Lower leg skin (tissue), 4 donors: ENCODE measurements at regions of chr15 and their contacts with region 1.

Region 1: GRCh38 chr15:71249986-71250385 is 134.7 kb downstream of the THSD4 start:
- DNase-seq: no peak
- H3K4me3 ChIP-seq: no peak overlapping the region
- CTCF ChIP-seq: no peak
- POLR2A ChIP-seq: no peak

Region 2: DNA sequence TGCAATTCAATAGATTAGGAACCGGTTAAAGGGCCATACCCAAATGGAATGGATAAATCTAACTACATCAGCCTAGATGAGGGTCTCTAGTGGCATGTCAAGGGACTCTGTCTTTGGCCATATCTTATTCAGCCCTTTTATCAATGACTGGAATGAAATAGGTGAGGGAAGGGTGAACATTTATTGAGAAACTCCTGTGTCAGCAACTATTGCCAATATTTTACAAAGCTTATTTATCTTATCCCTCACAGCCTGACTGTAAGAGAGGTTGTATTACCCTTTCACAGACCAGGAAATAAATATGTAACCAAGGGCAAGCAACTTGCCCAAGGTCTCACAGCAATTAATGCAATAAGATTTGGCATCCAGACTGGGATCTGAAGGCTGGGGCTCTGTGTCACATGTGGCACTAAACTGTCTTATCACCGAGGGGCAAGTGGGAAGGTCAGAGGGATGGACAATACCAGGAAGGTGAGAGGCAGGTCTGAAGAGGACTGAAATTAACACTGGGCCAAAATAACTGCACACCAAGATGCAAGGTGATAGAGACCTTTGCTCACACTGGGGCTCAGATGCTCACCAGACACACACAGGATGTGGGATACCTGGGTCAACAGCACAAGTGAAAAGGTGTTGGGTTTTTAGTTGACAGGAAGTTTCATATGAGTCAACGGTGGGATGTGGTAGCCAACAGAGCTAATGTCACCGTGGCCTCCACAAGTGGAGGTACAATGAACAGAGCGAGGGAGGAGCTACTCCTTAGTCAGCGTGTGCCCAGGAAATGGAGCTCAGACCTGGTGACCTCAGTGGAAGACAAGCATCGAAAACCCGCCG is 1536.0 kb before region 1 on chr15:
- intact Hi-C with region 1: no loop called
- DNase-seq: no peak
- H3K4me3 ChIP-seq: no peak overlapping the region
- CTCF ChIP-seq: no peak
- POLR2A ChIP-seq: no peak

Region 3: DNA sequence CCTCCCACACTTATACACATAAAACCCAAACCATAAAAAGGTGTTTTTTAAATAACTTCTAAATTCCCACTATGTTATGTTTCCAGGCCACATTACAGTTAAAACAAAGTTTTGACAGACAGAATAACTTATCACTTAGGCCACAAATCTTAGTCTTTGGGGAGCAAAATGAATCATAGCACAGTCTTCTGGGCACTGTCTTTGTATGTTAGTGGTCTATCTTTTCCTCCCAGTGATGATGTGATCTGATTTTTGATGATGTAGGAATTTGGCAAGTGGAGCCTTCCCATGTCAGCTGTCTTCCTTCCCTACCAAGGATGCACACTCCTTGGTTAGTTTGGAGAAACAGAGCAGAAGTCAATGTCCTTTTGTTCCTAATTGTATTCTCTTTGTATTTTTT is 67.5 kb before region 1 on chr15:
- intact Hi-C with region 1: no loop called
- DNase-seq: no peak
- H3K4me3 ChIP-seq: no peak overlapping the region
- CTCF ChIP-seq: no peak
- POLR2A ChIP-seq: no peak

Region 4: DNA sequence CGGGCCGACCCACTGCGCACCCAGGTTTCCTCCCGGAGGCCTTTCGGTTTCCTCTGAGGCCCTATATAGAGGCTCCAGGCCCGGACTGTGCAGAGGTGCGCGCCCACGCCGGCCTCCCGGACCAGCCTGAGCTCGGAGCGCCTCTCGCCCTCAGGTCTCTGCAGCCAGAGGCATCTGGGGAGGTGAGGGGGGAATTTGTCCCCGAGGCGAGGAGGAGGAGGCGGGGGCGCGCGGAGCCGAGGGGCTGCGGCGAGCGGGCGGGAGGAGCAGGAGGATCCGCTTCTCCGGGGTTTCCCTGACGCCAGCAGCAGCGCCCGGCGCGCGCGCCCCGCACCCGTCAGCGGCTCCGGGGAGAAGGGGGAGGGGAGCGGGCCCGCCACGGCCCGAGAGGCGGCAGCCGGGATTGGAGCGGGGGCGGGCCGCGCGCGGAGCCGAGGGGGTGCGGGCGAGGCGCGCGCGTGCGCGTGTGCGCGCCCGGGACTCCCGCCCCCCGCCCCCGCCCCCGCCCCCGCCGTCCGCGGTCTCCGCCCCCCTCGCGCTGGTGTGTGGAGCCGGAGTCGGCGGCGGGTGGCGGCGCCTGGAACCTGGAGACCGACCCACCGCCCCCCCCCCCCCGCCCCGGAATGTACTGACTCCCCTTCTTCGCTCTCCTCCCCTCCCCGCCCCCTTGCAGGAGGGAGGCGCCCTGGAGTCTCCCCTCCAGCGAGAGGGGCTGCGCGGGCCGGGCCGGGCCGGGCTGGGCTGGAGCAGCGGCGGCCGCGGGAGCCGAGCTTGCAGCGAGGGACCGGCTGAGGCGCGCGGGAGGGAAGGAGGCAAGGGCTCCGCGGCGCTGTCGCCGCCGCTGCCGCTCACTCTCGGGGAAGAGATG is 1802.1 kb after region 1 on chr15 and contains the start of gene NEO1:
- intact Hi-C with region 1: loop called (anchors 5 kb)
- DNase-seq: peak; percentile 76 to 95
- H3K4me3 ChIP-seq: peak within 1 kb of the TSS; percentile 84
- CTCF ChIP-seq: no peak
- POLR2A ChIP-seq: no peak
- total RNA-seq, gene NEO1: 60.0 to 102 (median 80.9) TPM